Naive thymus-derived CD4-positive, alpha-beta T cell (primary cell): ENCODE measurements at regions of chr19 and their contacts with region 1.

Region 1: DNA sequence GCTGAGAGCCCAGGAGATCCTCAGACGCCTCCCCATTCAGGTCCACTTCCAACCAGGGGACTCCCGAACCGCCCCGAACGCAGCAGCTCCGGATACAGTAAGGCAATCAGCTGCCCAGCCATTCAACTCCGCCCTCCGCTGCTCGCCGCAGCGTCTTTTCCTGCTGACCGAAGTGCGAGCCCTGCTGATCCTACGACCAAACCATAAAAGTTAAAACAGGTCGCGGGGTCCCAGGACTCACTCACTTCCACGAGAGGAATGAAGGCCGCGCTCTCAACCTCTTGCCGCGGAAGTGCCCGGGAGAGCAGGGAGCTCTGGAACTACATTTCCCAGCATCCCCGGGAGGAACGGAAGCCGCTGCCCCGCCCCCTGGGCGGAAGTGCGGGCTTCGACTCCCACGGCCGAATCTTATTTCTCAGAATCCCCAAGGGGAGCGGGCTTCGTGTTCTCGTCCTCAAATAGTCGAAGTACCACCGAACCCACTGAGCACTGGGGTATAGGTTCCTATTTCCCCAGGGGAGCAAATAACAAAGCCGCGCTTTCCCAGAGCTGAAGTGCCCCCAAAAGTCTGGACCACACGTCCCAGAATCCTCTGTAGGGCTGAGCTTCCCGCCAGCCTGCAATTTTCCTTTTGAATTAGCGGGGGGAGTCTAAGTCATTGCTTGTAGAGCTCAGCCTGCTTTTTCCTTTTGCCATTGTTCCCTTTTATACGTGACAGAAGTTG is at the start of gene ZNF45:
- DNase-seq: peak; percentile 65 to 89 (median 86)
- ATAC-seq: peak; percentile 98
- H3K4me3 ChIP-seq: peak within 1 kb of the TSS; percentile 84
- H3K4me3 Mint-ChIP-seq: peak within 1 kb of the TSS; percentile 93 to 98 (median 96)
- H3K27ac ChIP-seq: peak within 1 kb of the TSS; percentile 81
- H3K27ac Mint-ChIP-seq: peak within 1 kb of the TSS; percentile 81 to 96 (median 93)
- H3K4me1 ChIP-seq: peaks cover 16 to 17% of the 10 kb centered on the region in 2 donors
- H3K4me1 Mint-ChIP-seq: peaks cover 10 to 46% (median 32%) of the 10 kb centered on the region in 7 donors
- H3K27me3 ChIP-seq: no peaks in the 10 kb centered on the region
- H3K27me3 Mint-ChIP-seq: peaks cover 0 to 7% (median 0%) of the 10 kb centered on the region in 5 donors
- total RNA-seq, gene ZNF45: 8.4 to 28.5 (median 15.3) TPM

Region 2: GRCh38 chr19:43826787-43827754 is 108.1 kb before region 1 on chr19 and contains the start of gene ZNF283:
- CTCF ChIA-PET with region 1: no interaction called
- POLR2A ChIA-PET with region 1: no interaction called
- intact Hi-C with region 1: loop called (anchors 1 to 2 kb)
- DNase-seq: peak; percentile 60 to 78 (median 74)
- ATAC-seq: peak; percentile 99
- H3K4me3 ChIP-seq: peak within 1 kb of the TSS; percentile 77
- H3K4me3 Mint-ChIP-seq: peak within 1 kb of the TSS; percentile 76 to 93 (median 90)
- H3K27ac ChIP-seq: peak within 1 kb of the TSS; percentile 66
- H3K27ac Mint-ChIP-seq: peak within 1 kb of the TSS; percentile 49 to 86 (median 77)
- H3K4me1 ChIP-seq: peaks cover 4 to 12% of the 10 kb centered on the region in 2 donors
- H3K4me1 Mint-ChIP-seq: peaks cover 16 to 25% (median 21%) of the 10 kb centered on the region in 7 donors
- H3K27me3 ChIP-seq: no peaks in the 10 kb centered on the region
- H3K27me3 Mint-ChIP-seq: peaks cover 1 to 16% (median 9%) of the 10 kb centered on the region in 5 donors
- total RNA-seq, gene ZNF283: 4.3 to 24.4 (median 7.7) TPM

Region 3: DNA sequence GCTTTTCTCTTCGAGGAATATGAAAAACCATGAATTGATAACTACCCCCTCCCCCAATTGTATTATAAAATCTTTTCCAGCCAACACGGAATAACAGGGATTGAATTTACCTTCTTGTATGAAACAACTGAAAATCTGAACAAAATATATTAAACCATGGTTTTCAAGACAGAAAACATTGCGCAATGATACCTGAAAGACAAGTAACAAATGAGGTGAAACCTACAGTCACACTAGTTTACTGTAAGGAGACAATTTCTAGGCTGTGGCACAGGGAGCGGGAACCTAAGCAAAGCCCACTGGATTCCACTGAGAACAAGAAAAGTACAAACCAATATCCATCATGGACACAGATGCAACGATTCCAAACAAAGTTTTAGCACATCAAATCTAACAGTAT is 54.7 kb before region 1 on chr19:
- CTCF ChIA-PET with region 1: no interaction called
- POLR2A ChIA-PET with region 1: no interaction called
- intact Hi-C with region 1: no loop called
- DNase-seq: no peak
- ATAC-seq: no peak
- H3K4me3 ChIP-seq: no peak overlapping the region
- H3K4me3 Mint-ChIP-seq: no peak overlapping the region
- H3K27ac ChIP-seq: no peak overlapping the region
- H3K27ac Mint-ChIP-seq: no peak overlapping the region
- H3K4me1 ChIP-seq: no peaks in the 10 kb centered on the region
- H3K4me1 Mint-ChIP-seq: no peaks in the 10 kb centered on the region
- H3K27me3 ChIP-seq: no peaks in the 10 kb centered on the region
- H3K27me3 Mint-ChIP-seq: no peaks in the 10 kb centered on the region

Region 4: DNA sequence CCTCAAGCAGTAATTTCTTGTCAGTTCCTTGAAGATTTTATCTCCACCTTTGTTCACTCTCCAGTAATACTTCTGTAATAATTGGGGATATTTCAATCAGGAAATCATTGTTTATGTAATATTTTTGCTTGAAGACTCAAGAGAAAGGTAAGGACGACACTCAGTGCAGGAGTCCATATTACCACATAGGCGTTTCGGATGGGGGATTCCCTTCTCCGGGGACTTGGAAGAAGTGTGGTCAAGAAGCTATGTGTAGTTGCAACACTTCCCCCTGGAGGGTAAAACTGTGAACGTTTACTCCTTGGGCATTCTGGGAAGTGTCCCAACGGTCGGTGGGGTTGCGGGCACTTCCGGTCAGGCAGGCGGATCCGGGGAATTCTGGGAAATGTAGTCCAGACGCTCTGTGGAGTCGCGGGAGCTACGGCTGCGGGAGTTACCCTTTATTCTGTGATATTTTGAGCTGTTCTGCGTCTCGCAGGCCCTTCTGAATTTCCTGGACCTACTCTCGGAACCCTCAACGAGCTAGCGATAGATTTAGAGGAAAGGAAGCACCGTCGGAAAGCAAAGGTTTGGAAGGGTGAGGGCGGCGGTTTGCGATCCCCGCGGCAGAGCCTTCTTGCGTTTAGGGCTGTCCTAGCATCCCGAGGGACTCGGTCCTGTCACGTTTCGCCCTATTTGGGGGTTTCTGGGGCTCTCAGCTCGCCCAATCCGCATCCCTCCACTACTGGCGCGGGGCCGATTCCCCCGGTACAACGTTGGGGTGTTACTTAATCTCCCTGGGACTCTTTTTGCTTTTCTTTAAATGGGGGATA is 15.9 kb after region 1 on chr19 and contains the start of gene ZNF221:
- CTCF ChIA-PET with region 1: no interaction called
- POLR2A ChIA-PET with region 1: interaction called, 6 read pairs
- intact Hi-C with region 1: loop called (anchors 1 kb)
- DNase-seq: peak in 8 of 9 donors; percentile 8 to 64 (median 28)
- ATAC-seq: peak; percentile 88
- H3K4me3 ChIP-seq: peak within 1 kb of the TSS; percentile 91
- H3K4me3 Mint-ChIP-seq: peak within 1 kb of the TSS; percentile 91 to 98 (median 96)
- H3K27ac ChIP-seq: peak within 1 kb of the TSS; percentile 28
- H3K27ac Mint-ChIP-seq: peak within 1 kb of the TSS in 8 of 9 donors; percentile 44 to 92 (median 80)
- H3K4me1 ChIP-seq: peaks cover 0 to 5% of the 10 kb centered on the region in 2 donors
- H3K4me1 Mint-ChIP-seq: peaks cover 6 to 17% (median 11%) of the 10 kb centered on the region in 7 donors
- H3K27me3 ChIP-seq: no peaks in the 10 kb centered on the region
- H3K27me3 Mint-ChIP-seq: peaks cover 0 to 40% (median 21%) of the 10 kb centered on the region in 5 donors
- total RNA-seq, gene ZNF221: 0.69 to 2.0 (median 1.7) TPM

Region 5: GRCh38 chr19:44010468-44010867 is 75.3 kb after region 1 on chr19:
- CTCF ChIA-PET with region 1: no interaction called
- POLR2A ChIA-PET with region 1: no interaction called
- intact Hi-C with region 1: no loop called
- DNase-seq: no peak
- ATAC-seq: no peak
- H3K4me3 ChIP-seq: no peak overlapping the region
- H3K4me3 Mint-ChIP-seq: no peak overlapping the region
- H3K27ac ChIP-seq: no peak overlapping the region
- H3K27ac Mint-ChIP-seq: no peak overlapping the region
- H3K4me1 ChIP-seq: no peaks in the 10 kb centered on the region
- H3K4me1 Mint-ChIP-seq: peaks cover 0 to 10% (median 4%) of the 10 kb centered on the region in 7 donors
- H3K27me3 ChIP-seq: no peaks in the 10 kb centered on the region
- H3K27me3 Mint-ChIP-seq: no peaks in the 10 kb centered on the region

Region 6: DNA sequence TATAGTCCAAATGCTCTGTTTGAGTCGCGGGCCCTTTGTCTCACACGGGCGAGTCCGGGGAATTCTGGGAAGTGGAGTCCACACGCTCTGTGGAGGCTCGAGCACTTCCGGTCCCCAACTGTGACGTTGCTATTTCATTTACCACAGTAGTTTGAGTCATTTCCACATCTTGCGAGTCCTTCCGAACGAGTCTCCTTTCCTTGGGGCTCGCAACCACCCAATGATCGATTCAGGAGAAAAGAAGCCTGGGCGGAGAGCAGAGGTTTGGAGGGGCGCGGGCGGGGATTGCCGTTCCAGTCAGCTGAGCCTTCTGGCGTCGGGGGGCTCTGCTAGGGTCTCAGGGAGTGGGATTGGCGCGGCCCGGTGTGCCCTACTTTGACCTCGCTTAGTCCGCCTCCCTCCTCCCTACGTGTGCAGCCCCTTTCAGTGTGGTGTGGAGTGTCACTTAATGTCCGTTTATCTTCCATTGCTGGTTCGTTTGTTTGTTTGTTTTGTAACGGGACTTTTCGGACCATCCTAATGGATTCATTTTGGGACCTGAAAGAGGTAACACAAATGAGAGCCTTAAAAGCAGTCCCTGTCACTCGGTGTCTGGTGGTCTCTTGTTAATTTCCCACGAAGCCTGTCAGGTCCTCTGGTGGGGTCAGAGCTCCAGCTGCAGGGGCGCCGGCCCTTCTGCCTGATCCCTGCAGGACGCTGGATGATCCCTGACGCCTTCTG is 90.2 kb after region 1 on chr19 and contains the start of gene ZNF222:
- CTCF ChIA-PET with region 1: no interaction called
- POLR2A ChIA-PET with region 1: interaction called, 3 read pairs
- intact Hi-C with region 1: loop called (anchors 1 kb)
- DNase-seq: peak; percentile 41 to 78 (median 66)
- ATAC-seq: peak; percentile 99
- H3K4me3 ChIP-seq: peak within 1 kb of the TSS; percentile 76
- H3K4me3 Mint-ChIP-seq: peak within 1 kb of the TSS; percentile 95 to 100 (median 98)
- H3K27ac ChIP-seq: peak within 1 kb of the TSS; percentile 71
- H3K27ac Mint-ChIP-seq: peak within 1 kb of the TSS; percentile 84 to 98 (median 94)
- H3K4me1 ChIP-seq: peaks cover 5 to 9% of the 10 kb centered on the region in 2 donors
- H3K4me1 Mint-ChIP-seq: peaks cover 12 to 40% (median 31%) of the 10 kb centered on the region in 7 donors
- H3K27me3 ChIP-seq: no peaks in the 10 kb centered on the region
- H3K27me3 Mint-ChIP-seq: peaks cover 0 to 9% (median 3%) of the 10 kb centered on the region in 5 donors
- total RNA-seq, gene ZNF222: 2.9 to 10.1 (median 4.5) TPM

Region 7: DNA sequence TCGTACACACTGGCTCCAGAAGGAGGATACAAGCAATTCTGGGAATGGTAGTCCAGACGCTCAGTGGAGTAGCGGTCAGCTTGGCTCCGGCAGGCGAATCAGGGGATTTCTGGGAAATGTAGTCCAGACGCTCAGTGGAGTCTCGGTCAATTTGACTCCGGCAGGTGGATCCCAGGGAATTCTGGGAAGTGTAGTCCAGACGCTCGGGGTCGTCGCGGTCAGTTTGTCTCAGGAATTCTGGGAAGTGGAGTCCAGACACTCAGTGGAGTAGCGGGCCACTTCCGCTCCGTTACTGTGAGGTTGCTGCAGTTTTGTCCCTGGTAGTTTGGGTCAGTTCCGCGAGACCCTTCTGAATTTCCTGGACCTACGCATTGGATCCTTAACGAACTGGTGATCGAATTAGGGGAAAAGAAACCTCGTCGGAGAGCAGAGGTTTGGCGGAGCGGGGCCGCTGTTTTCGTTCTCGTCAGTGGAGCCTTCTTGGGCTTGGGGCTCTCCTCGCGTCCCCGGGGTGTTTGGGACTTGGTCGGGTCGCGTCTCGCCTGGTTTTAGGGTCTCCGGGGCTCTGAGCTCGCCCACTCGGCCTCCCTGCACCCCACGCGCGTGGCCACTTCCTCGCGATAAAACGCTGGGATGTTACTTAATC is 178.1 kb after region 1 on chr19 and contains the start of gene ZNF225:
- CTCF ChIA-PET with region 1: no interaction called
- POLR2A ChIA-PET with region 1: no interaction called
- intact Hi-C with region 1: loop called in 1 of 2 experiments (anchors 1 kb)
- DNase-seq: peak; percentile 41 to 84 (median 76)
- ATAC-seq: peak; percentile 100
- H3K4me3 ChIP-seq: peak within 1 kb of the TSS; percentile 89
- H3K4me3 Mint-ChIP-seq: peak within 1 kb of the TSS; percentile 95 to 100 (median 99)
- H3K27ac ChIP-seq: peak within 1 kb of the TSS; percentile 68
- H3K27ac Mint-ChIP-seq: peak within 1 kb of the TSS; percentile 82 to 97 (median 88)
- H3K4me1 ChIP-seq: peaks cover 3 to 8% of the 10 kb centered on the region in 2 donors
- H3K4me1 Mint-ChIP-seq: peaks cover 16 to 38% (median 31%) of the 10 kb centered on the region in 7 donors
- H3K27me3 ChIP-seq: no peaks in the 10 kb centered on the region
- H3K27me3 Mint-ChIP-seq: no peaks in the 10 kb centered on the region
- total RNA-seq, gene ZNF225: 0.69 to 13.0 (median 5.1) TPM

Region 8: DNA sequence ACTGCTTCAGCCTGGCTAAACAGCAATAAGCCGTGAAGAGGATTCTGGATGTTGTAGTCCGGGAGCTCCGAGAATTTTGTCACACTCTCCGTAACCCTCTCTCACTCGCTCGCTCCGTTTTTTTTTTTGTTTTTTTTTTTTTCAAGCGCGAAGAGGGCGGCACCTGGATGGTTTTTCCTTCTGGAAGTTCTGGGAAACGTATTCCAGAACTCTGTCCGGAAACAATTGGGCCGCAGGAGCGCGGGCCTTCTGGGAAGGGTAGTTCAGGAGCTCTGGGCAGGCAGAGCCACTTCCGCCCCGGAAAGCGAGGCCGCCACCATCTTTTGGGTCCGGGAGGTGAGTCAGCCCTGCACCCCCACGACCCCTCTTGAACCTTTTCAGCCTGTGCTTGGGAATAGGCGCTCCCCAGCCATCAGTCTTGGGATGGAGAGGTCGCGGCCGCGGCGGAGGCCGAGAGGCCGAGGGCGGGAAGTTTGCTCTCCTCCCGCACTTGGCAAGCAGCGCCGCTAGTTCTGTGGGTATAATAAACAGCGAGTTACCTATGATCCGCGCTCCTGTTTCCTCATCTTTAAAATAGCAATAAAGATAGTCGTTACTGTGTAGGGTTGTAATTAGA is 277.2 kb after region 1 on chr19 and contains the start of gene ZNF227:
- CTCF ChIA-PET with region 1: no interaction called
- POLR2A ChIA-PET with region 1: no interaction called
- intact Hi-C with region 1: loop called (anchors 1 to 5 kb)
- DNase-seq: peak; percentile 47 to 80 (median 75)
- ATAC-seq: peak; percentile 98
- H3K4me3 ChIP-seq: peak within 1 kb of the TSS; percentile 98
- H3K4me3 Mint-ChIP-seq: peak within 1 kb of the TSS; percentile 85 to 100 (median 96)
- H3K27ac ChIP-seq: peak within 1 kb of the TSS; percentile 81
- H3K27ac Mint-ChIP-seq: peak within 1 kb of the TSS; percentile 82 to 97 (median 92)
- H3K4me1 ChIP-seq: peaks cover 0 to 15% of the 10 kb centered on the region in 2 donors
- H3K4me1 Mint-ChIP-seq: peaks cover 19 to 45% (median 31%) of the 10 kb centered on the region in 7 donors
- H3K27me3 ChIP-seq: no peaks in the 10 kb centered on the region
- H3K27me3 Mint-ChIP-seq: peaks cover 0 to 4% (median 0%) of the 10 kb centered on the region in 5 donors
- total RNA-seq, gene ZNF227: 18.3 to 51.5 (median 30.0) TPM